ENCODE measurements at regions of chr3 and their contacts with region 1.

Region 1: DNA sequence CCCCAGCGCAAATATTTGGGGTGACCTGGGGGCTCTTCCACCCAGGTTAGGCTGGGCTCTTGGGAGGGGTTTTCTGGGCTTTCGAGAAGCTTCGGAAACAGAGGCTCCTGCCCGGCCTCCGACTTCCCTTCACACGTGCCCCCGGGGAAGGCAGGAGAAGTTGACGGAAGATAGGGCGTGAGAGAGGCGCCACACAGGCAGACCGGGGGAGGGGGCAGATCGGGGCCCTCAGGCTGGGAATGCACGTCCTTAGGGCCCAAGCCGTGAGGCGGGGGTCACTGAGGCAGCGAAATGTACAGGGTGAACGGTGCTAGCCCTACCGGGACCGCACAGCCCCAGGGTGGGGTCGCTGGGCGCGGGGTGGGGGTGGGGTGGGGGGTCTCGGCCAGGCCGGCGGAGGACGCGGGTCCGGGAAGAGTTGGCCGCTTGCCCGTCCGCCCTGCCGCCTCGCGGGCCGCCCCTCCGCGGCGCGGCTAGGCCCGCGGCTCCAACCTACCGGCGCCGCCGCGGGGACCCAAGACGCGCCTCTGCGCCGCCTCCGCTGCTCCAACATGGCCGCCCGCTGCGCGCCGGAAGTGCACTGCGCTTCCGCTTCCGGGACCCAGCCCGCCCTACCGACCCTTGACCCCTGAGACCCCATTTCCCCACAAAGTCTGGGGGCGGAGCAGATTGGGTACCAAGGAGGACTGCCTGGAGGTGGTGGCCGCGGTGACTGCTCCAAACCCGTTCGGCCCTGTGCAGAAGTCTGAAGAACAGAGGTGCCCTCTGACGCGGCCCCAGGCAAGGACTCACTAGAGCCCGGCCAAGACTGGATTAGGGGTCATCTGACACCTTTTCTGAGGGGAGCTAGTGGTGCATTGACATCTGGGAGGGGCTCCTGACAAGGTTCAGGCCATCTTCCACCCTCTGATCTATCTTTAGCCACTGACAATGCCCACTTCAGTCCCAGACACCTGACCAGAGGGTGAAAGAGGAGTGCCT is at the start of gene CCDC71:
- DNase-seq: peak; percentile 95
- total RNA-seq, gene CCDC71: 14.1 to 14.3 TPM

Region 2: GRCh38 chr3:48679411-48680391 is 486.4 kb before region 1 on chr3:
- intact Hi-C with region 1: loop called in 1 of 2 experiments (anchors 10 kb)
- DNase-seq: peak; percentile 55

Measured in posterior vena cava (tissue), 2 donors.